Activated CD4-positive, alpha-beta memory T cell treated with anti-CD3 and anti-CD28 coated beads, Interleukin-2, amount 10 ng/mL, durations not matched to agents 7 days and 5 days (primary cell): ENCODE measurements at regions of chr2 and their contacts with region 1.

Region 1: GRCh38 chr2:88859461-88859860 is 168.0 kb downstream of the RPIA start:
- DNase-seq: no peak
- H3K4me3 Mint-ChIP-seq: no peak overlapping the region
- H3K27ac Mint-ChIP-seq: no peak overlapping the region
- H3K4me1 Mint-ChIP-seq: no peaks in the 10 kb centered on the region
- H3K27me3 Mint-ChIP-seq: peaks cover 29% of the 10 kb centered on the region

Region 2: GRCh38 chr2:88824951-88825350 is 34.5 kb before region 1 on chr2:
- CTCF ChIA-PET with region 1: no interaction called
- POLR2A ChIA-PET with region 1: no interaction called
- DNase-seq: no peak
- H3K4me3 Mint-ChIP-seq: no peak overlapping the region
- H3K27ac Mint-ChIP-seq: no peak overlapping the region
- H3K4me1 Mint-ChIP-seq: no peaks in the 10 kb centered on the region
- H3K27me3 Mint-ChIP-seq: peaks cover 3% of the 10 kb centered on the region

Region 3: DNA sequence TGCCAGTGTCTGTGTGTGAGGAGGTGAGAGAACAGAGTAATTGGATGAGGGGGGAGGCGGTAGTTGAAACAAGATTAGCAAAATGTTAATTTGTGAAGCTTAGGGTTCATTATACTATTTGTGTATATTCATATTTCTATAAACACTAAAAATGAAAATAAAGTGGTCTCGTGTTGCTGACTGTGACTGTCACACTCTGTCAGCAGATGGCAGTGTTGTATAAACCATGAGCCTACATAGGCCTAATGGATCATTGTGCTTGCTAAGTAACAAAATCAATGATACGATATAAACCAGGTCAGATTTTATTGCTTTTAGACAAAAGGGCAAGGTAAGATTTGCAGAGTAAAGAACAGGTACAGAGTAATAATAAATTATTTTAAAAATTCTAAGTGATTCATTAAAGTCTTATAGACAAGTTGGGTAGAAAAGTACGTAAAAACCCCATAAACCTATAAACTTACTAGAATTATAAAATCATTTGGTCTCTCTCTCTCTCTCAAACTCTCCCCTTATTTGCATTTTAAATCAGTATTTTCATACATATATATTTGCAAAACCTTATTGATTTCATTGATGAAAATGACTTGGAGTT is 14.7 kb after region 1 on chr2:
- CTCF ChIA-PET with region 1: interaction called, 29 read pairs
- POLR2A ChIA-PET with region 1: no interaction called
- DNase-seq: peak; percentile 40
- H3K4me3 Mint-ChIP-seq: no peak overlapping the region
- H3K27ac Mint-ChIP-seq: no peak overlapping the region
- H3K4me1 Mint-ChIP-seq: no peaks in the 10 kb centered on the region
- H3K27me3 Mint-ChIP-seq: peaks cover 31% of the 10 kb centered on the region